ENCODE measurements at regions of chr1 and their contacts with region 1.

Region 1: DNA sequence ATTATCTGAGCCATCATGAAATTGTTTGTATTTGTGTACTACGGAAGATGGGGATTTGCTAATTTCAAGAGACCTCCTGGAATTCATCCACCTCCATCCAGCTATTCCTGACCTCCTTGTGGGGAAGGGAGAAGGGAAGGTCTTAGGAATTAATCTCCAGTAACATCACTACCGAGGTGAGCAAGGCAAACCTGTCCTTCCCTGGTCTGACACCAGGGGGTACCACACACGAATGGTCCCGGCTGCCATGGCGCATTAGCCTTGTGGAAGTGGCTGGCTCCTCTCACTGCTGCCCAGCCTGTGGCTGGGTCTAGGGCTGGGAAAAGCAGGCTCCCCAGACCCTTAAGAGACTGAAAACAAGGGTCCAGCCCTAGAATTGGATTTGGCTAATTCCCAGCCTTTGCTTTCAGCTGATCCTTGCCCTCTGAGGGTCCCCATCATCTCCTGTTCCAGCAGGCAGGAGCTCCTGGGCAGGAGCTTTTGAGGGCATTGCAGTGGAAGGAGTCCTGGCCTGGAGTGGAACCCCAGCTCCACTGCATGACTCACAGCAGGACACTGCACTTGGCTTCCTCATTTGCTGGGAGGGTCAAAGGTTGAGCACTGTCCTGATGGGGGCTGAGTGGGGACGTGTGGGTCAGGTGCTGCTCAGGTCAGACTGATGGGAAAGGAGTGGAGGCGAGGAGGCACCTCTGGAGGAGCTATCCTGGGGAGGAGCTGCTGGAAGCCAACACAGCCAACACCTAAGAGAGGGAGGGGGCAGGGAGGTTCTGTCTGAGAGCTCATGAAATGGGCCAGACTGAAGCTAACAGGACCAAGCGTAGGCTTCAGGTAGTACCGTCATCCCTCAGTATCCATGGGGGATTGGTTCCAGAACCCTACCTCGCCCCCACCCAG is 34.7 kb downstream of the RIMS3 start:
- DNase-seq: peak; percentile 39

Region 2: DNA sequence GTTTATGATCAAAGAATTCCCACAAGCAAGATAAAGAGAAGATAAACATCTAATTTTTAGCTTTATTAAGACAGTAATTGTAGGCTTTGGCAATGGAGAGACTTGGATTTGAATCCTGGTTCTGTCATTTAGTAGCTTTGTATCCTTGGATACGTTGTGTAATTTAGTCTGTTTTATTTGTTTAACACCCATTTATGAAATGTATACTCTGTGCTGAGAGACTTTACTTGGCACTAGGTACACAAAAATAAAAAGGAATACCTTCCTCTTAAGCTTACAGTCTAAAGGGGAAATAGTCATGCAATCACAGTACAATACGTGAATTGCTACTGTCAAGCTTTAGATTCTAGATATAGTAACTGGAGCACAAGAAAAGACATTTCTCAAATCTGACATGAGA is 348.9 kb before region 1 on chr1:
- in situ Hi-C with region 1: no loop called
- DNase-seq: no peak

Region 3: DNA sequence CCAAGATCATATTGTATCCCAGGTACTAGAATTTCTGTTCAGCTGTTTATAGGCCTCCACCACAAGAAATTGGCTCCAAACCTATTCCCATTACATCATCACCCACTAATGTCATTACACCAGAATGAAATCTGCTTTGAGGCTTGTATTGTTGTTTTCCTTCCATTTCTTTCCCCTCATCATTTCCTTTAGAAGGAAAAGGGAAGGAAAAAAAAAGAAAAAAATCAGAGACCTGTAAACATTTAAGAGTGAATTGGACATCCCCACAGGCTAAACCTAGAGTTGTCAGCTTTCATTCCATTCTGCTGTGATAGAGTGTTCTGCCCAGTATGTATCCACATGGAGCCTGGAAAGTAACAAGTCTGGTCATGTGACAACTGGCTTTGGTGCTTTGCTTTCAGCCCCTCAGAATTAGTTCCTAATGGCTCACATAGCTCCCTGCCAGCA is 105.4 kb after region 1 on chr1:
- in situ Hi-C with region 1: loop called (anchors 25 kb)
- DNase-seq: peak; percentile 12